ENCODE measurements at regions of chr11 and their contacts with region 1.

Region 1: GRCh38 chr11:72722050-72722748 is 30.0 kb downstream of the ARAP1 start:
- DNase-seq: peak; percentile 84 to 94
- ATAC-seq: peak; percentile 76 to 88 (median 82)
- H3K4me3 ChIP-seq: peak overlapping the region; percentile 62 to 88 (median 72)
- H3K27ac ChIP-seq: peak overlapping the region; percentile 87 to 99 (median 93)
- H3K4me1 ChIP-seq: peaks cover 23 to 84% (median 62%) of the 10 kb centered on the region in 9 donors
- H3K27me3 ChIP-seq: no peaks in the 10 kb centered on the region
- CTCF ChIP-seq: no peak

Region 2: GRCh38 chr11:72781313-72782050 is 59.3 kb after region 1 on chr11:
- intact Hi-C with region 1: loop called in 1 of 10 experiments (anchors 10 kb)
- DNase-seq: peak in 1 of 2 donors; percentile 51
- ATAC-seq: peak in 7 of 8 donors; percentile 16 to 47 (median 37)
- H3K4me3 ChIP-seq: peak overlapping the region; percentile 4 to 68 (median 65)
- H3K27ac ChIP-seq: peak overlapping the region in 4 of 10 donors; percentile 7 to 60 (median 14)
- H3K4me1 ChIP-seq: peaks cover 11 to 47% (median 37%) of the 10 kb centered on the region in 9 donors
- H3K27me3 ChIP-seq: peaks cover 0 to 8% (median 0%) of the 10 kb centered on the region in 7 donors
- CTCF ChIP-seq: no peak

Region 3: GRCh38 chr11:72814286-72815109 is 92.3 kb after region 1 on chr11 and contains the start of gene ATG16L2:
- intact Hi-C with region 1: loop called in 3 of 10 experiments (anchors 5 kb)
- DNase-seq: peak; percentile 86 to 90
- ATAC-seq: peak; percentile 93 to 96 (median 95)
- H3K4me3 ChIP-seq: peak within 1 kb of the TSS; percentile 58 to 98 (median 82)
- H3K27ac ChIP-seq: peak within 1 kb of the TSS; percentile 85 to 99 (median 96)
- H3K4me1 ChIP-seq: peaks cover 7 to 55% (median 36%) of the 10 kb centered on the region in 9 donors
- H3K27me3 ChIP-seq: no peaks in the 10 kb centered on the region
- CTCF ChIP-seq: peak; percentile 15 to 60 (median 33)
- total RNA-seq, gene ATG16L2: 8.0 to 23.9 (median 12.3) TPM

Region 4: DNA sequence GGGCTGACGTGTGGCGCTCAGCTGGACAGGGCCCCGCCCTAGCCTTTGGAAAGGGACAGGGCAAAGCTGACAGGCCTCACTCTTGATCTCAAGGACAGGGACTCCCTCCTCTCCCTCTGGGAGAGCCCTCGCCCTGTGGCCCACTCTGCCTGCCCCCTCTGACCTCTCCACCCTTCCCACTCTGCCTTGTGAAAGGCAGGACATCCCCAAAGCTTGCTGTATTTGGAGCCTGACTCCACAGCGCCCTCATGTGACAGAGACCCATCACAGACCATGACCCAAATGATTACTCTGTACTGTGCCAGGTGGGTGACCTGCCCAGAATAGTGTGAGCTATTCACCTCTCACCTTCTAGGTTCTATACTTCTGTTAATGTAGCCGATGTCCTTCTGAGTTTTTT is 514.7 kb after region 1 on chr11:
- intact Hi-C with region 1: loop called in 2 of 10 experiments (anchors 5 kb)
- DNase-seq: peak; percentile 54 to 69
- ATAC-seq: peak in 6 of 8 donors; percentile 7 to 52 (median 36)
- H3K4me3 ChIP-seq: no peak overlapping the region
- H3K27ac ChIP-seq: peak overlapping the region in 9 of 10 donors; percentile 57 to 90 (median 80)
- H3K4me1 ChIP-seq: peaks cover 25 to 84% (median 72%) of the 10 kb centered on the region in 9 donors
- H3K27me3 ChIP-seq: no peaks in the 10 kb centered on the region
- CTCF ChIP-seq: peak; percentile 34 to 75 (median 66)

Region 5: GRCh38 chr11:73288873-73289707 is 566.9 kb after region 1 on chr11:
- intact Hi-C with region 1: loop called in 2 of 10 experiments (anchors 10 kb)
- DNase-seq: peak; percentile 70 to 72
- ATAC-seq: peak; percentile 79 to 89 (median 82)
- H3K4me3 ChIP-seq: peak overlapping the region in 8 of 10 donors; percentile 16 to 47 (median 37)
- H3K27ac ChIP-seq: peak overlapping the region; percentile 5 to 91 (median 60)
- H3K4me1 ChIP-seq: peaks cover 12 to 59% (median 31%) of the 10 kb centered on the region in 9 donors
- H3K27me3 ChIP-seq: no peaks in the 10 kb centered on the region
- CTCF ChIP-seq: peak; percentile 92 to 99 (median 96)

Measured in heart right ventricle (tissue), 16 donors.